Activated CD4-positive, alpha-beta T cell treated with anti-CD3 and anti-CD28 coated beads, Interleukin-2, amount 10 ng/mL, durations not matched to agents 24 days and 14 days (primary cell): ENCODE measurements at regions of chr5 and their contacts with region 1.

Region 1: DNA sequence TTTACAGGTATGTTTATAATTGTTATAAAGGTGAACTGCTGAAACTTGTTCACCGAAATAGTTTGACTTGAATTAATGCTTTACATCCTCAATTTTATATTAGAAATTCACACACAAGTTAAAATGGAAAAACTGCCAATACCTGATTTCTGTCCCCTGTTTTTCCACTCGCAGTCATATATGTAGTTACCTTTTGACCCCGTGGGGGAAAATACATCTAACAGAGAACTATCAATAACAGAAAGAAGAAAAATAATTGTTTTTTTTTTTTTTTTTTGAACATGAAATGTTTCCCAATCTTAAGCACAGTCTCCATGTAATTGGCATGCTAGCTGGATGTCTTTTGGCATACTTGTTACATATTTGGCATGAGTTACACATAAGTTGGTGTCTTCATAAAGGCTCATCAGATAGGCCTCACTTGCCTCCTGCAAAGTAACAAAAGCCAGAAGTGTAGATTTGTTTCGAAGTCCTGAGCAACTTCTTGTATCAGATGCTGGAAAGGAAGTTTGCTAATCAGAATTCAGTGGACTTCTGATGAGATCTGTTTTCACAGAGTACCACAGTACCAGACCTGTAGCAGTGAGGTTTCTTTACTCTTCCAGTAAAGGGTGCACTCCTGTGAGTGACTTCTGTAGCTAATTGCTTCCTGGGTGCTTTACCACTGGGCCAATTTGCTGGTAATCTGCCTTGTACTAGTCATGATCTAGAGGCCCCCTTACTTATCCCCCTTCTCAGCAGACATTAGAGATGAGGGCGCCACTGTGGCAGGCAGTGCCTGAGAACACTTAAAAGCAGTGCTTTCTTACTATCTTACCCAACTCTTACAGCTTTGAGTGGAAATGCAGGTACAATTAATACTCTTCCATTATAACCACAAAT is 36.2 kb upstream of the CXXC5 start:
- DNase-seq: no peak
- H3K4me3 Mint-ChIP-seq: no peak overlapping the region
- H3K27ac Mint-ChIP-seq: peak overlapping the region; percentile 71
- H3K4me1 Mint-ChIP-seq: peaks cover 15% of the 10 kb centered on the region
- H3K27me3 Mint-ChIP-seq: no peaks in the 10 kb centered on the region

Region 2: GRCh38 chr5:139560752-139561654 is 50.9 kb before region 1 on chr5 and contains the start of gene UBE2D2:
- intact Hi-C with region 1: no loop called
- DNase-seq: peak; percentile 99
- H3K4me3 Mint-ChIP-seq: peak within 1 kb of the TSS; percentile 98
- H3K27ac Mint-ChIP-seq: peak within 1 kb of the TSS; percentile 94
- H3K4me1 Mint-ChIP-seq: peaks cover 33% of the 10 kb centered on the region
- H3K27me3 Mint-ChIP-seq: no peaks in the 10 kb centered on the region
- total RNA-seq, gene UBE2D2: 272 and 275 TPM in 2 replicates

Region 3: GRCh38 chr5:139597134-139597533 is 14.8 kb before region 1 on chr5:
- intact Hi-C with region 1: loop called (anchors 2 kb)
- DNase-seq: no peak
- H3K4me3 Mint-ChIP-seq: no peak overlapping the region
- H3K27ac Mint-ChIP-seq: peak overlapping the region; percentile 15
- H3K4me1 Mint-ChIP-seq: peaks cover 19% of the 10 kb centered on the region
- H3K27me3 Mint-ChIP-seq: no peaks in the 10 kb centered on the region

Region 4: GRCh38 chr5:139711067-139711905 is 99.3 kb after region 1 on chr5:
- intact Hi-C with region 1: no loop called
- DNase-seq: peak; percentile 78
- H3K4me3 Mint-ChIP-seq: peak overlapping the region; percentile 73
- H3K27ac Mint-ChIP-seq: no peak overlapping the region
- H3K4me1 Mint-ChIP-seq: peaks cover 13% of the 10 kb centered on the region
- H3K27me3 Mint-ChIP-seq: peaks cover 42% of the 10 kb centered on the region